Spleen (tissue), 13 donors: ENCODE measurements at regions of chr20 and their contacts with region 1.

Region 1: GRCh38 chr20:4171538-4172116 is 156.3 kb upstream of the RNF24 start:
- DNase-seq: no peak
- H3K4me3 ChIP-seq: peak overlapping the region in 7 of 8 donors; percentile 45 to 69 (median 53)
- H3K27ac ChIP-seq: peak overlapping the region in 5 of 8 donors; percentile 27 to 69 (median 63)
- H3K4me1 ChIP-seq: peaks cover 0 to 23% (median 13%) of the 10 kb centered on the region in 6 donors
- H3K27me3 ChIP-seq: peaks cover 0 to 10% (median 0%) of the 10 kb centered on the region in 7 donors
- CTCF ChIP-seq: no peak
- POLR2A ChIP-seq: no peak

Region 2: DNA sequence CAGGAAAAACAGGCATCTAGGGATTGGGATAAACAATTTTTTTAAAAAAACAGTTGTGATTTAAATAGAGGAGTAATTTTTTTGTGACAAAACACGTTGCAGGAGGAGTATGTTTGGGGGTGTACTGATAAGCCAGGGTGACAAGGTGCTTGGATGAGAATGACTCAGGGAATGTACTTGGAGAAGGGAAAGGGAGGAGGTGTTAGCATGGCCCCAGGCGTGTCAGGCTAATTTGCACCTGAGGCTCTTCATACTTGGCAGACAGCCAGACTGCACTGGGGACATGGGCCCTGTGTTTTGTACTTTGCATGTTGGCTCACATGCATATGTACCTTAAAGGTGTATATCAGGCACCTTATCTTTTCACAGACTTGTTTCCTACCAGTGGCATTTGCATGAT is 259.7 kb before region 1 on chr20:
- intact Hi-C with region 1: no loop called
- DNase-seq: peak; percentile 36
- H3K4me3 ChIP-seq: no peak overlapping the region
- H3K27ac ChIP-seq: no peak overlapping the region
- H3K4me1 ChIP-seq: peaks cover 8 to 48% (median 14%) of the 10 kb centered on the region in 6 donors
- H3K27me3 ChIP-seq: no peaks in the 10 kb centered on the region
- CTCF ChIP-seq: no peak
- POLR2A ChIP-seq: no peak

Region 3: DNA sequence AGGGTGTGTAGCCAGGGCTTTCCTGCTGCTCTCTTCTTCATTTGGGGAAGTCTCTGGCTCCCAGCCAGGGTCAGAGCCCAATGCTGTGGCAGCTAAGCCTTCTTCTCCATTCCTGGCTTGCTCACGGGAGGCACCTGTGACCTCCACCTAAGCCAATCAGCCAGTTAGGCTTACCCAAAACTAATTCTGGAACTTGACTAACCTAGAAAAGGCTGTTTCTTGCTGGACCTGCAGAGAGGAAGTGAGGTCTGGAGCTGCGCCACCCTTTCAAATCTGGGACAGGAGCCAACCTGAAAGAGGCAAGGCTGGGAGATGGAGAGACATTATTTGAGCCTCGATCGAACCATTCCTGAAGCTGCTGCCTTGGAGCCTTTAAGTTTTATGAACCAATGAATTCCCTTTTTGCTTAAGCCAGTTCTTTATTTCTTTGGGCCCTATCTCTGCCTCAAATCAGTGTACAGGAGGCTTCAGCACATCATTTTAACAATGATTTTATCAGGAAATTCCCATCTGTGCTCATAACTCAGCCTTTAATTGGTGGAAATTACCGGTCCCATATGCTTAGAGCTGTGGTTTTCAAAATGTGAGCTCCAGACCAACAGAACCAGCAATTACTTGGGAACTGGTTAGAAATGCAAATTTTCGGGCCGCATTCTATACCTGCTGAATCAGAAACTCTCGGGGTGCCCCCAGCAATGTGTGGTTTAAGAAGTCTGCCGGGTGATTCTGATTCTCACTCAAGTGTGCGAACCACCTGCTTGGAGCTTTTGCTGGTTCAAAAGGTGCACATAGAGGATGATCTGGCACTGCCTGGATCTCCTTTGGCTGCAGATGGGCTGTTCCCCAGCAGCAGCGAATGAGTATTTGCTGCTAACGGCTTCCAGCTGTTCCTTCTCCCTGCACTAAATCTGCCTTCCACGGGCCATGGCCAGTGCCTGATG is 58.9 kb before region 1 on chr20:
- intact Hi-C with region 1: loop called (anchors 2 kb)
- DNase-seq: no peak
- H3K4me3 ChIP-seq: no peak overlapping the region
- H3K27ac ChIP-seq: peak overlapping the region in 2 of 8 donors; percentile 3 to 8
- H3K4me1 ChIP-seq: peaks cover 0 to 44% (median 12%) of the 10 kb centered on the region in 6 donors
- H3K27me3 ChIP-seq: peaks cover 0 to 35% (median 0%) of the 10 kb centered on the region in 7 donors
- CTCF ChIP-seq: no peak
- POLR2A ChIP-seq: no peak

Region 4: GRCh38 chr20:4383966-4384365 is 212.3 kb after region 1 on chr20:
- intact Hi-C with region 1: no loop called
- DNase-seq: no peak
- H3K4me3 ChIP-seq: no peak overlapping the region
- H3K27ac ChIP-seq: no peak overlapping the region
- H3K4me1 ChIP-seq: no peaks in the 10 kb centered on the region
- H3K27me3 ChIP-seq: peaks cover 0 to 12% (median 0%) of the 10 kb centered on the region in 7 donors
- CTCF ChIP-seq: no peak
- POLR2A ChIP-seq: no peak